ENCODE measurements at regions of chr6 and their contacts with region 1.

Region 1: GRCh38 chr6:27177485-27178406 is 69.8 kb upstream of the PRSS16 start:
- DNase-seq: peak; percentile 77
- CTCF ChIP-seq: peak; percentile 47

Region 2: DNA sequence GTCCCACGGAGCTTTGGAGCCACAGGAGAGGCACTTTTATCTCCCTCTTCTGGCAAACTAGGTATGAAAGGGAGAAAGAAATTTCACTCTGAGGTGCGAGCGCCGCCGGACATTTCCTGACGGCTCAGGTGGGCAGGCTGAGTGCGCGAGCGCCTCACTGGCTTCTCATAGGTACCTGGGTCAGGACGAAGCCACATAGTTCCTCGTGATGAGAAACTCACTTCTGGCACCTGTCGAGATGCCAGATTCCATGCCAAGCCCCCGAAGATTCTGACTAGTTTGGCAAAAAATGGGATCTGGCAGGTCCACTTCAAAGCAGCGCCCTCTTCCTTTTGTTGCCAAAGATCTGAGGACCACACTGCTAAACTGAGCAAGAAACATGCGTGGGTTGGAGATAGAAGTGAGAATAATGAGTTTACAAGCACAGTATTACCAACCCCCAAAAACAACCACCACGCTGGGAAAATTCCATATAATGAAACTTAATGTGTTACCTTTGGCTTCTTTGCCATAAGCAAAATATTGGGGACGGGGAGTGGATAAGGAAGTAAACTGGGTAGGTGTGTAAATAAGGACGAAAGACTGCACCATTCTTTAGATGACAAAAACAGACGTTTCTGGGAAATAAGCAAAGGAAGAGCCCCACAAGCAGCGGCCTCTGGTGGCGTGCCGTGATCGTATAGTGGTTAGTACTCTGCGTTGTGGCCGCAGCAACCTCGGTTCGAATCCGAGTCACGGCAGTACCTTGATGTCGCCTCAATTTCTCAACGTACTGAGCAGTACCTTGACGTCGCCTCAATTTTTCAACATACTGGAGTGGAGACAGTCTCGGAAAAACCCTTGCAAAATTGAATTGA is 20.1 kb before region 1 on chr6:
- CTCF ChIA-PET with region 1: interaction called, 29 read pairs
- POLR2A ChIA-PET with region 1: no interaction called
- DNase-seq: peak; percentile 58
- CTCF ChIP-seq: peak; percentile 55

Region 3: GRCh38 chr6:27188885-27189418 is 11.2 kb after region 1 on chr6:
- CTCF ChIA-PET with region 1: interaction called, 21 read pairs
- POLR2A ChIA-PET with region 1: no interaction called
- DNase-seq: peak; percentile 66
- CTCF ChIP-seq: peak; percentile 66